GM12878 (cell line): ENCODE measurements at regions of chr11 and their contacts with region 1.

Region 1: GRCh38 chr11:43852057-43852636 is 28.5 kb upstream of the ALKBH3 start:
- DNase-seq: peak; percentile 27
- ATAC-seq: peak; percentile 95
- H3K4me3 ChIP-seq: no peak overlapping the region
- H3K27ac ChIP-seq: no peak overlapping the region
- H3K4me1 ChIP-seq: no peaks in the 10 kb centered on the region
- H3K27me3 ChIP-seq: no peaks in the 10 kb centered on the region
- CTCF ChIP-seq: peak; percentile 79 to 92 (median 88); a peak in 5 of 6 replicates
- EP300 ChIP-seq: no peak
- POLR2A ChIP-seq: no peak
- RAD21 ChIP-seq: peak; percentile 94

Region 2: GRCh38 chr11:43567396-43567975 is 284.7 kb before region 1 on chr11:
- CTCF ChIA-PET with region 1: interaction called, 31 read pairs
- POLR2A ChIA-PET with region 1: no interaction called
- RAD21 ChIA-PET with region 1: interaction called, 15 read pairs
- SMC1A ChIA-PET with region 1: interaction called, 13 read pairs
- in situ Hi-C with region 1: no loop called
- intact Hi-C with region 1: no loop called
- DNase-seq: no peak
- ATAC-seq: peak; percentile 87
- H3K4me3 ChIP-seq: no peak overlapping the region
- H3K27ac ChIP-seq: no peak overlapping the region
- H3K4me1 ChIP-seq: no peaks in the 10 kb centered on the region
- H3K27me3 ChIP-seq: no peaks in the 10 kb centered on the region
- CTCF ChIP-seq: peak; percentile 67 to 74 (median 69)
- EP300 ChIP-seq: no peak
- POLR2A ChIP-seq: no peak
- RAD21 ChIP-seq: peak; percentile 65

Region 3: DNA sequence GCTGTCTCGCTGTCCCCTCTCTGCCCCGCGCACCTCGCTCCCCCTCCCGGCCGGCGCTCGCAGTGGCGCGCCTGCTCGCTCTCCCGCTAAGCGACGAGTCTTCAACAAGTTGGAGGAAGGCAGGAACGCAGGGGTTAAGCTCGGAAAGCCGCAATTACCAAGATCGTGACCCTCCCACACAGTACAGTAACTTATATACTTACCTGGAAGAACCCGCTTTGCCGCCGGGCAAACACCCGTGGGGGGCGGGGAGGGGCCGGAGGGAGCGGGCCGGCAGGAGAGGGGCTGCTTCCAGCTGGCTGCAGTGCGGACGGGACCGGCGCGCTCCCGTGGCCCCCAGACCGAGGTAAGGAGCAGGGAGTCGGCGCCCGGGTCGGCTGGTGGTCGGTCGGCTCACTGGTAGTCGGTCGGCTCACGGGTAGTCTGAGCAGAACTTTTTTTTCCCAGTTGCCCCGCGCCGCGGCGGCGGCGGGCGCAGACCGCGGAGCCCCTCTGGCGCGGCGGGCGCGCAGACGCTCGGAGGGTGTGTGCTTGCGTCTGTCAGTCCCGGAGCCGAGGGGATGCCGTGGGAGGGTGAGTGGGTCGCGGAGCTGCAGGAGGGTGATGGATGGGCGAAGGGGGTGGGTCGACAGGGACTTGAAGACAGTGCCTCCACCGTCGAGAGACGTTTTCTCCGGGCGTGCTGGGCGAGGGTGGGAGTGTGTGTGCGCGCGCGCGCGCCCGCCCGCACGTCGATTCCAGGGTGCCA is 272.8 kb before region 1 on chr11:
- CTCF ChIA-PET with region 1: interaction called, 31 read pairs
- POLR2A ChIA-PET with region 1: no interaction called
- RAD21 ChIA-PET with region 1: interaction called, 15 read pairs
- SMC1A ChIA-PET with region 1: interaction called, 9 read pairs
- in situ Hi-C with region 1: no loop called
- intact Hi-C with region 1: loop called (anchors 5 kb)
- DNase-seq: no peak
- ATAC-seq: peak; percentile 73
- H3K4me3 ChIP-seq: peak overlapping the region; percentile 58; the same call in 1 of the 2 replicates
- H3K27ac ChIP-seq: no peak overlapping the region
- H3K4me1 ChIP-seq: no peaks in the 10 kb centered on the region
- H3K27me3 ChIP-seq: peaks cover 33 to 53% of the 10 kb centered on the region in 2 experiments
- CTCF ChIP-seq: peak in 2 of 3 experiments; percentile 21 to 27; a peak in 3 of 6 replicates
- EP300 ChIP-seq: no peak
- POLR2A ChIP-seq: no peak
- RAD21 ChIP-seq: 0 out of 2 replicates have a peak, but pooled peaks have one; percentile 20

Region 4: GRCh38 chr11:43779306-43779705 is 72.8 kb before region 1 on chr11:
- CTCF ChIA-PET with region 1: no interaction called
- POLR2A ChIA-PET with region 1: no interaction called
- RAD21 ChIA-PET with region 1: no interaction called
- SMC1A ChIA-PET with region 1: no interaction called
- in situ Hi-C with region 1: no loop called
- intact Hi-C with region 1: no loop called
- DNase-seq: no peak
- ATAC-seq: no peak
- H3K4me3 ChIP-seq: no peak overlapping the region
- H3K27ac ChIP-seq: no peak overlapping the region
- H3K4me1 ChIP-seq: no peaks in the 10 kb centered on the region
- H3K27me3 ChIP-seq: no peaks in the 10 kb centered on the region
- CTCF ChIP-seq: no peak
- EP300 ChIP-seq: no peak
- POLR2A ChIP-seq: no peak
- RAD21 ChIP-seq: no peak

Region 5: DNA sequence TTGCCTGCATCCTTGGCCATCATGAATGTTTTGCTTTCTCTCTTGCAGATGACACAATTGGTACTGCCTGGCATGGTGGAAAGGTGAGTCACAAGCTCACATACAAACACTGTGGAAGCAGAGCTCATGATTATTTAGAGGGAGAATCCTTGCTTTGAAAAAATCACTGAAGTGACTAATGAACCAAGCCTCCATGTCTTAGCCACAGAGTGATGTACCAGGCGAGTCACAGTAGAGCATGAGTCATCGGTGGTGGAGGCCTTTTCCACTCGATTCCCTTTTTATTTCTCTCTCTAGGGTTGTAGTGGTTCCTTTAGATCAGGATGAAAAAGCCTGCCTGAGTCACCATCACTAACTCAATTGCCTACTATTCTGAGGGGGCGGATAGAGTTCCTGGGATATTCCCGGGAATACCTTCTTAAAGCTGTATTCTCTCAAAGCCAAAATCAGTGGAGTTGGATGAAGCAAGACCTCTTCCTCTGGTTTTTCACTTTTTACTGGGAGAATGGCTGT is 21.2 kb before region 1 on chr11:
- CTCF ChIA-PET with region 1: interaction called, 45 read pairs
- POLR2A ChIA-PET with region 1: interaction called, 3 read pairs
- RAD21 ChIA-PET with region 1: interaction called, 12 read pairs
- SMC1A ChIA-PET with region 1: interaction called, 17 read pairs
- in situ Hi-C with region 1: no loop called
- intact Hi-C with region 1: no loop called
- DNase-seq: no peak
- ATAC-seq: no peak; the same call in 2 of the 3 replicates
- H3K4me3 ChIP-seq: no peak overlapping the region
- H3K27ac ChIP-seq: no peak overlapping the region
- H3K4me1 ChIP-seq: no peaks in the 10 kb centered on the region
- H3K27me3 ChIP-seq: no peaks in the 10 kb centered on the region
- CTCF ChIP-seq: no peak
- EP300 ChIP-seq: no peak
- POLR2A ChIP-seq: no peak
- RAD21 ChIP-seq: no peak

Region 6: DNA sequence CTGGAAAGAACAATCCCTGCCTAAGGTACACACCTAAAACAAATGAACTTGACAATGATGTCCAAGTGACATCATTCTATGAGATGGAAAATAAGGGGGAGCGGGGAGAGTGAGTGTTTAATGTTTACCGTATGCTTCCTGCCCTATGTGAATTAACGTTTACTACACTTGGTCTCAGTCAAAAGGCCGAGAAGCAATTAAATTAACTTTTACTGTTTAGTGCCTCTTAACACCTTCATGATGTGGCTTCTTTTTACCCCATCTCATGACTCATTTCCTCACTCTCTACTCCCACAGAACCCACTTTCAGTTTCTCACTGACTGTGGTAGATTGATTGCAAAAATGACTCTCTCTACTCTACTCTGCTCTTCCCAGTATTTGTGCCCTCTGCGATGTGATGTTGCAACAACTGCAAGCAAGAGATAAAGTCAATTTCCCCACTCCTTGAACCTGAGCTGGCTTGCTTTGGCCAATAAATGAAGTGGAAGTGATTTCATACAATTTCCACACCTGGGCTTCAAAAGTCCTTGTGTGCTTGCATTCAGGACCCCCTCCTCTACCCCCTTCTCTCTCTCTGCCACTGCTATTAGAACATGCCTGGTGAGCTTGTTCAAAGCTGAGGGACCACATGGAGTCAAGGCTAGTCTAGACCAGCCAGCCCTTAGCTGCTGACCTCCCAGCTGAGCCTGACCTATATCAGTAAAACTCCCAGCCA is 16.9 kb after region 1 on chr11:
- CTCF ChIA-PET with region 1: interaction called, 12 read pairs
- POLR2A ChIA-PET with region 1: no interaction called
- RAD21 ChIA-PET with region 1: interaction called, 4 read pairs
- SMC1A ChIA-PET with region 1: interaction called, 8 read pairs
- in situ Hi-C with region 1: no loop called
- intact Hi-C with region 1: no loop called
- DNase-seq: peak; percentile 84
- ATAC-seq: peak; percentile 100
- H3K4me3 ChIP-seq: no peak overlapping the region
- H3K27ac ChIP-seq: no peak overlapping the region
- H3K4me1 ChIP-seq: peaks cover 10% of the 10 kb centered on the region
- H3K27me3 ChIP-seq: peaks cover 5 to 6% of the 10 kb centered on the region in 2 experiments; a peak in 3 of 4 replicates
- CTCF ChIP-seq: no peak
- EP300 ChIP-seq: peak; percentile 89 to 99
- POLR2A ChIP-seq: no peak
- RAD21 ChIP-seq: no peak

Region 7: GRCh38 chr11:43987384-43988039 is 135.4 kb after region 1 on chr11:
- CTCF ChIA-PET with region 1: no interaction called
- POLR2A ChIA-PET with region 1: no interaction called
- RAD21 ChIA-PET with region 1: no interaction called
- SMC1A ChIA-PET with region 1: no interaction called
- in situ Hi-C with region 1: no loop called
- intact Hi-C with region 1: no loop called
- DNase-seq: no peak
- ATAC-seq: no peak
- H3K4me3 ChIP-seq: no peak overlapping the region
- H3K27ac ChIP-seq: no peak overlapping the region
- H3K4me1 ChIP-seq: no peaks in the 10 kb centered on the region
- H3K27me3 ChIP-seq: no peaks in the 10 kb centered on the region; a peak in 1 of 4 replicates
- CTCF ChIP-seq: no peak
- EP300 ChIP-seq: no peak
- POLR2A ChIP-seq: no peak
- RAD21 ChIP-seq: no peak